ENCODE measurements at regions of chr1 and their contacts with region 1.

Region 1: GRCh38 chr1:12078938-12079861 is 16.1 kb downstream of the TNFRSF8 start:
- DNase-seq: peak; percentile 74
- H3K4me3 Mint-ChIP-seq: peak overlapping the region; percentile 44
- H3K27ac Mint-ChIP-seq: peak overlapping the region; percentile 70
- H3K4me1 Mint-ChIP-seq: peaks cover 33% of the 10 kb centered on the region
- H3K27me3 Mint-ChIP-seq: peaks cover 5% of the 10 kb centered on the region

Region 2: DNA sequence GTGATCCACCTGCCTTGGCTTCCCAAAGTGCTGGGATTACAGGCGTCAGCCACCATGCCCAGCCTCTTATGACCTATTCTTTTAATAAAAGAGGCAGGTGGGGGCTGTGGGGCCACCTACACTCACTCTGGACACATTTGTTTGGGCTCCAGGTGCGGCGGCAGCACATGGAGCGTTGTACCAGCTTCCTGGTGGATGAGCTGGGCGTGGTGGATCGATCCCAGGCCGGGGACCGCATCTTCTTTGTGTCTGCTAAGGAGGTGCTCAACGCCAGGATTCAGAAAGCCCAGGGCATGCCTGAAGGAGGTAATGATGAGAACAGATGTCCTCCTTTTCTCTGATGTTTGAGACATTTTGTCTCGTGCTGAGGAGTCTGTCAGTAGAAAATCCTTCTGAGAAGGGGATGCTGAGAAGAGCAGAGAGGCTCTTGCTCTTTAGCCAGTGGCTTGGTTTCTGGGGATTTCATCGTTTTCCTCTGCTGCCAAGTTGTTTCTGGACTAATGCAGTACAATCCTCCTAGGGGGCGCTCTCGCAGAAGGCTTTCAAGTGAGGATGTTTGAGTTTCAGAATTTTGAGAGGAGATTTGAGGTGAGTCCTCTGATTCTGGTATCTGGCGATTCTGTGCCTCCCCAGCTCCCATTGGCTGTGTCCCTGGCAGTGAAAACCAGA is 77.8 kb before region 1 on chr1:
- CTCF ChIA-PET with region 1: interaction called, 13 read pairs
- POLR2A ChIA-PET with region 1: no interaction called
- intact Hi-C with region 1: loop called (anchors 1 kb)
- DNase-seq: peak; percentile 79
- H3K4me3 Mint-ChIP-seq: no peak overlapping the region
- H3K27ac Mint-ChIP-seq: peak overlapping the region; percentile 60
- H3K4me1 Mint-ChIP-seq: peaks cover 3% of the 10 kb centered on the region
- H3K27me3 Mint-ChIP-seq: no peaks in the 10 kb centered on the region

Region 3: GRCh38 chr1:12031039-12031980 is 47.9 kb before region 1 on chr1:
- CTCF ChIA-PET with region 1: interaction called, 14 read pairs
- POLR2A ChIA-PET with region 1: no interaction called
- intact Hi-C with region 1: no loop called
- DNase-seq: peak; percentile 65
- H3K4me3 Mint-ChIP-seq: no peak overlapping the region
- H3K27ac Mint-ChIP-seq: no peak overlapping the region
- H3K4me1 Mint-ChIP-seq: no peaks in the 10 kb centered on the region
- H3K27me3 Mint-ChIP-seq: no peaks in the 10 kb centered on the region

Region 4: GRCh38 chr1:12052008-12052573 is 27.1 kb before region 1 on chr1:
- CTCF ChIA-PET with region 1: interaction called, 18 read pairs
- POLR2A ChIA-PET with region 1: interaction called, 5 read pairs
- intact Hi-C with region 1: no loop called
- DNase-seq: peak; percentile 80
- H3K4me3 Mint-ChIP-seq: no peak overlapping the region
- H3K27ac Mint-ChIP-seq: peak overlapping the region; percentile 49
- H3K4me1 Mint-ChIP-seq: peaks cover 50% of the 10 kb centered on the region
- H3K27me3 Mint-ChIP-seq: peaks cover 8% of the 10 kb centered on the region

Region 5: DNA sequence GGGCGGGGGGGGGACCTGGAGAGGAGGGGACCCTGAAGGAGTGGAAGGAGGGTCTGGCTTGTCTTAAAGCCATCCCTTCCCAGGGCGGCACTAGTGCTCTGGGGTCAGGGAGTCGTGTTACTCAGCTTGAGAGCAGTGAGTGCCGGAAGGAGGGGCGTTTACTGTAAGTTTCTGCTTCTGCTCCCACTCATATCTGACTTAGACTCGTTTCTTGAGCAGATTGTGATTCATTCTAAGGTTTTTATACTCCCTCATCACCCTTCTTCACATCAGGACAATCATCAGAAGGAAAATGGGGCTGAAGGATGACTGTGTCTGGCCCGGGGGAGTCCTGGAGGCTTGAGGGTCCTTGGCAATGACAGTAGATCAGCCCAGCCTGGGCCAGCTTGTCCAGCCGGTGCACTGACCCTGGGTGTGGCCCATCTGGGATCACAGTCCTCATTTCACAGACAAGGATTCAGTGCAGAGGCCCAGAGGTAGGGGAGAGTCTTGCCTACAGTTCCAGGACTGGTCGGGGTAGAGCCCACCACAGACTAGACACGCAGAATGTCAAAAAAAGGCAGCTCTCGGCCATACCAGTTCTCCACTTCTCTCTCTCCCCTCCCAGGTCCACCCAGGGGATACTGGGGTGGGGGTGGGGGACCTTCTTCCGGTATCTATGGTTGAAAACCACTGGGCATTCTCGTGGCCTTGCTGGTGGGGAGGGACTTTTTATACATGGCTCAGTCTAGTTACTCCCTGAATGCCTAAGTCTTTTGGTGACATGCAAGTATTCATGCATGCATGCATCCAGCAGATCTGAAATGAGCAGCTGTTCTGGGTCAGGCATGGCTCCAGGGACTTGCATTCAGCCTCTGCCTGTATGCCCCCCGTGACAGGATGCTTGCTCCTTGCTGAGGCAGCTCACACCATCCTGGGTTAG is 11.0 kb before region 1 on chr1:
- CTCF ChIA-PET with region 1: interaction called, 44 read pairs
- POLR2A ChIA-PET with region 1: interaction called, 7 read pairs
- intact Hi-C with region 1: loop called (anchors 1 kb)
- DNase-seq: peak; percentile 89
- H3K4me3 Mint-ChIP-seq: peak overlapping the region; percentile 69
- H3K27ac Mint-ChIP-seq: peak overlapping the region; percentile 96
- H3K4me1 Mint-ChIP-seq: peaks cover 62% of the 10 kb centered on the region
- H3K27me3 Mint-ChIP-seq: peaks cover 32% of the 10 kb centered on the region

Measured in activated CD4-positive, alpha-beta memory T cell treated with anti-CD3 and anti-CD28 coated beads for 36 hours (primary cell).